Pancreas (tissue), 10 donors: ENCODE measurements at regions of chr7 and their contacts with region 1.

Region 1: DNA sequence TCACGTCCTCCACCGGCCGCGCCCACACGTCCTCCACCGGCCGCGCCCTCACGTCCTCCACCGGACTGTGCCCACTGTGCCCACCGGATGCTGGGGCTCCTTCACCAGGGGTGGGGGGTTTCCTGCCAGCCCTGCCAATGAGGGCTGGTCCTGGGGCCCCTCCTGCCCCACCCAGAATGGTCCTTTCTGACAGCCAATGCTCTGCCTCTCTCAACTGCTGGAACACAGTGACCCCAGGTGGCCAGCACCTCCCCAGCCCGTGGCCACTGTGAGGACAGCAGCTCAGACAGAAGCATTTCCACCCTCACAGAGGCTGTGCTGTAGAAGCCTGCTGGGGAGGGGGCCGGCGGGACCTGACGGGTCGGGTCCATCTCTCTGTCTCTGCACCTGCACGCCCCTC is 90.1 kb upstream of the DNAAF5 start:
- DNase-seq: peak in 5 of 6 donors; percentile 20 to 80 (median 57)
- ATAC-seq: peak; percentile 43 to 90 (median 75)
- H3K4me3 ChIP-seq: no peak overlapping the region
- H3K27ac ChIP-seq: no peak overlapping the region
- H3K4me1 ChIP-seq: no peaks in the 10 kb centered on the region
- H3K27me3 ChIP-seq: no peaks in the 10 kb centered on the region
- CTCF ChIP-seq: peak in 3 of 4 donors; percentile 10 to 31 (median 19)

Region 2: DNA sequence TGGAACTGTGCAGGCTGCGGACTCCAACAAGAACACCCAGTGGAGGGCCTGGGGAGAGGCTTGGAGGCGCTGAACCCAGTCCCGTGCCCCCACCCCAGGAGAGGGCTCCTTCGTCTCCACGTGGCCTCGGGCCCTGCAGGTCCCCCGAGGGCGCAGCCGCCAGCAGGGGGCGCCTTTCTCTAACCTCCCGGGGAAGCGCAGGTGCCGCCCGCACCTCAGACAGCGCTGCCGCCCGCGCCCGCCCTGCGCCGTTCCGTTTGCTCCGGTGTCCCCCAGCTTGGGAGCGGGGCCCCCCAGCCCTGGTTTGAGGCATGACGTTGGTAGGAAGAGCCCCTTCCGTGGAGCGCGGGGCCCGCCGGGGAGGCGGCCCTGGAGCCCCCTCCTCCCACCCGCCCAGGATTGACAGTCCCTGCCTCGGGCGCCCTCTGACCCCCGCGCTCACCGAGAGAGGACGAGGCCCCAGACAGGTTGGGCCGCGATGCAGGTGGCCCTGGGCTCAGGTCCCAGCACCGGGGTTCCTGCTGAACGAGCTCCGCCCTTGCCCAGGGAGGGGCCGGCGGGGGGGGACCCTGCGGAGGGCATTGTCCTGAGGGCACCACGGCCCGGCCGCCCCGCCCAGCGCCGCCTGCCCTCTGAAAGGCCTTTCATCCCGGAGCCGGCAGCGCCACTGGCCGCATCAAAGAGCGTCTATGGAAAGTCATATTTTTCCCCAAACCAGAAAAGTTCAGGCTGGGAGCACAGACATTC is 303.6 kb before region 1 on chr7:
- intact Hi-C with region 1: loop called in 2 of 3 experiments (anchors 5 to 10 kb)
- DNase-seq: peak; percentile 87 to 100 (median 94)
- ATAC-seq: peak; percentile 83 to 95 (median 90)
- H3K4me3 ChIP-seq: peak overlapping the region in 3 of 4 donors; percentile 3 to 45 (median 33)
- H3K27ac ChIP-seq: peak overlapping the region; percentile 80 to 89 (median 80)
- H3K4me1 ChIP-seq: peaks cover 13 to 17% (median 17%) of the 10 kb centered on the region in 3 donors
- H3K27me3 ChIP-seq: no peaks in the 10 kb centered on the region
- CTCF ChIP-seq: peak; percentile 90 to 94 (median 92)